ENCODE measurements at regions of chr13 and their contacts with region 1.

Region 1: DNA sequence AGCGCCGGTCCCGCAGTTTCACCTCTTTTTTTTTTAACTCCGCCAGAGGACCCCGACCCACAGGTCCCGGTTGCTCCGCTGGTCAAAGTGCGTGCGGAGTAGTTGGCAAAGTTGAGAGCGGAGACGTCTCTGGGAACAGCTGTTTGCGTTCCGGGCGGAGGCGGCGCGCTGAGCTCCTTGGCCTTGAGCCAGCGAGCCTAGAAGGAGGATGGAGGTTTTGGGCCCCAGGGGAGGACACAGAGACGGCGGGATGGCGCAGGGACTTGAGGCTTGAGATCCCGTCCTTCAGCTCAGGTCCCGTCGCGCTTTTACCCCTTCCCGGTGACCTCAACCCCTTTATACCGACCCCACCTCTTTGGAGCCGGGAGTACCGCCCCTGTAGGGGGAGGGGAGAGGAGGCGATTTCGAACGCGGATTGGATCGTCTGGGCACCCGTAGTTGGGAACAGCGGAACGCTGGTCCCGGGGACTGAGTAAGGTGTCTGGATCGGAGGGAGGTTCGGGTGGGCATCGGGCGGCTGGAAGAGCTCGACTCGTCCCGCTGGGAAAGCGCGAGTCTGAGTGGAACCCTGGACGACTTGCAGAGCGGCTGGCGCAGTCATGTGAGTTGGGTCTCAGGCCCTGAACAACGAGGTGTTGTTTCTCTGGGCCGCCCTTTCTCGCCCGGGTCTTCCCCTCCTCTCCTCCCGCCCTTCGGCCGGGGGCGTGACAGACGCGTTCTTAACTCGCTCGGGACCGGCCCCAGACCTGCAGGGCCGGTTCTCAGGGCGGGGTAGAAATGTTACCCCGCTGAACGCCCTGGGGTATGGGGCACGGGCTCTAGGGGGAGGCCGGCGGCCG is at the start of gene WBP4:
- DNase-seq: peak; percentile 81 to 94 (median 90)
- ATAC-seq: peak; percentile 78
- H3K4me3 ChIP-seq: peak within 1 kb of the TSS; percentile 74
- H3K4me3 Mint-ChIP-seq: peak within 1 kb of the TSS; percentile 97 to 100 (median 99)
- H3K27ac ChIP-seq: peak within 1 kb of the TSS; percentile 77
- H3K27ac Mint-ChIP-seq: peak within 1 kb of the TSS; percentile 95 to 100 (median 100)
- H3K4me1 ChIP-seq: peaks cover 0 to 5% of the 10 kb centered on the region in 2 donors
- H3K4me1 Mint-ChIP-seq: peaks cover 33 to 82% (median 59%) of the 10 kb centered on the region in 7 donors
- H3K27me3 ChIP-seq: no peaks in the 10 kb centered on the region
- H3K27me3 Mint-ChIP-seq: peaks cover 0 to 10% (median 0%) of the 10 kb centered on the region in 5 donors
- total RNA-seq, gene WBP4: 6.5 to 9.8 (median 8.6) TPM

Region 2: DNA sequence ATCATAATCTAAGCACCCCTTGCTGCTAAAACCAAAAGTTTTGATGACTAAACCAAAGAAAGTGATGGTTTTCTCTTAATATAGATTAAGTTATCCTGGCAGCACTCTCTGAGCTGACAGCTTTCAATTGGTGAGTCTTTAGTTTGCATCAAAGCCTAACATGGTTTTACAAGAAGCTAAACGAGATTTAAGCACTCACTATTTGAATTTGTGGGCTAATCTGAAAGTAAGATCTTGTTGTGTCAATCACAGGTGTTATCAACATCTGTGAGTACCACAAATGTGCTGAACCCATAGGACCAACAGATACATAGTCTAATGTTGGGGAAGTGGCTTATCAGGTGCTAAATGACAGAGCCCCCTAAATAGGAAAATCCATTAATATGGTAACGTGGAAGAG is 1682.2 kb before region 1 on chr13:
- CTCF ChIA-PET with region 1: no interaction called
- POLR2A ChIA-PET with region 1: no interaction called
- intact Hi-C with region 1: no loop called
- DNase-seq: no peak
- ATAC-seq: no peak
- H3K4me3 ChIP-seq: no peak overlapping the region
- H3K4me3 Mint-ChIP-seq: no peak overlapping the region
- H3K27ac ChIP-seq: no peak overlapping the region
- H3K27ac Mint-ChIP-seq: no peak overlapping the region
- H3K4me1 ChIP-seq: no peaks in the 10 kb centered on the region
- H3K4me1 Mint-ChIP-seq: no peaks in the 10 kb centered on the region
- H3K27me3 ChIP-seq: no peaks in the 10 kb centered on the region
- H3K27me3 Mint-ChIP-seq: peaks cover 0 to 4% (median 2%) of the 10 kb centered on the region in 5 donors

Region 3: GRCh38 chr13:40770934-40771618 is 290.2 kb before region 1 on chr13 and contains the start of gene MRPS31:
- CTCF ChIA-PET with region 1: no interaction called
- POLR2A ChIA-PET with region 1: interaction called, 3 read pairs
- intact Hi-C with region 1: loop called (anchors 1 kb)
- DNase-seq: peak; percentile 89 to 97 (median 93)
- ATAC-seq: peak; percentile 99
- H3K4me3 ChIP-seq: peak within 1 kb of the TSS; percentile 78
- H3K4me3 Mint-ChIP-seq: peak within 1 kb of the TSS; percentile 94 to 100 (median 99)
- H3K27ac ChIP-seq: peak within 1 kb of the TSS; percentile 89
- H3K27ac Mint-ChIP-seq: peak within 1 kb of the TSS; percentile 93 to 100 (median 98)
- H3K4me1 ChIP-seq: peaks cover 15 to 16% of the 10 kb centered on the region in 2 donors
- H3K4me1 Mint-ChIP-seq: peaks cover 16 to 41% (median 33%) of the 10 kb centered on the region in 7 donors
- H3K27me3 ChIP-seq: no peaks in the 10 kb centered on the region
- H3K27me3 Mint-ChIP-seq: no peaks in the 10 kb centered on the region
- total RNA-seq, gene MRPS31: 15.8 to 39.9 (median 34.7) TPM

Region 4: GRCh38 chr13:40974460-40975407 is 86.6 kb before region 1 on chr13:
- CTCF ChIA-PET with region 1: interaction called, 5 read pairs
- POLR2A ChIA-PET with region 1: interaction called, 27 read pairs
- intact Hi-C with region 1: loop called (anchors 1 kb)
- DNase-seq: peak in 7 of 9 donors; percentile 43 to 66 (median 52)
- ATAC-seq: peak; percentile 88
- H3K4me3 ChIP-seq: no peak overlapping the region
- H3K4me3 Mint-ChIP-seq: peak overlapping the region; percentile 68 to 94 (median 82)
- H3K27ac ChIP-seq: peak overlapping the region; percentile 86
- H3K27ac Mint-ChIP-seq: peak overlapping the region; percentile 64 to 97 (median 82)
- H3K4me1 ChIP-seq: peaks cover 75 to 80% of the 10 kb centered on the region in 2 donors
- H3K4me1 Mint-ChIP-seq: peaks cover 75 to 99% (median 95%) of the 10 kb centered on the region in 7 donors
- H3K27me3 ChIP-seq: no peaks in the 10 kb centered on the region
- H3K27me3 Mint-ChIP-seq: no peaks in the 10 kb centered on the region

Region 5: DNA sequence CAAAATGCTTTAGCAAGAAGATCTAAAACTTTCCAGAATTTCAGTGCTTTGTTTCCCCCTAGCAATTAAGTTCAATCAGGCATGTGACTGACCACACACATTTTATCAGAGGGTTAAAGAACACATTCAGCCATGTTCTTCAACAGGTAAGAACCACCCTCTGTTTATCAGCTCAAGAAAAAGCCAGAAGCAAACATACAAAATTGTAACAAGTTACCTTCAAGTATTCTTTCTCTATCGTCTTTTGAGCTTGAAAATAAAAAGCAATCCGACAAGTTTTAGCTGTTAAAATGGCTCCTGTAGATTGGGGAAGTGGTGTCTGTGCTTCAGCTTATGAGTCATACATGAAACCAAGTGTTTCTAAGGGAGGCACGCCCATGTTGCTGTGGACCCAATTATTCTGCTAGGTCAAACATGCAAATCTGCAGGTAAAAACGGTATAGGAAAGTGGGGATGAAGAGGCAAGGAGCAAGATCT is 42.2 kb before region 1 on chr13 and contains the start of gene ELF1:
- CTCF ChIA-PET with region 1: interaction called, 5 read pairs
- POLR2A ChIA-PET with region 1: interaction called, 71 read pairs
- intact Hi-C with region 1: loop called (anchors 1 kb)
- DNase-seq: peak in 8 of 9 donors; percentile 35 to 83 (median 75)
- ATAC-seq: peak; percentile 93
- H3K4me3 ChIP-seq: peak within 1 kb of the TSS; percentile 76
- H3K4me3 Mint-ChIP-seq: peak within 1 kb of the TSS; percentile 79 to 94 (median 90)
- H3K27ac ChIP-seq: peak within 1 kb of the TSS; percentile 93
- H3K27ac Mint-ChIP-seq: peak within 1 kb of the TSS; percentile 90 to 98 (median 96)
- H3K4me1 ChIP-seq: peaks cover 14 to 22% of the 10 kb centered on the region in 2 donors
- H3K4me1 Mint-ChIP-seq: peaks cover 29 to 61% (median 50%) of the 10 kb centered on the region in 7 donors
- H3K27me3 ChIP-seq: no peaks in the 10 kb centered on the region
- H3K27me3 Mint-ChIP-seq: no peaks in the 10 kb centered on the region
- total RNA-seq, gene ELF1: 117 to 193 (median 180) TPM

Region 6: GRCh38 chr13:41193919-41194824 is 132.9 kb after region 1 on chr13 and contains the start of gene KBTBD7:
- CTCF ChIA-PET with region 1: no interaction called
- POLR2A ChIA-PET with region 1: interaction called, 3 read pairs
- intact Hi-C with region 1: loop called (anchors 1 kb)
- DNase-seq: peak; percentile 78 to 94 (median 83)
- ATAC-seq: peak; percentile 98
- H3K4me3 ChIP-seq: peak within 1 kb of the TSS; percentile 85
- H3K4me3 Mint-ChIP-seq: peak within 1 kb of the TSS; percentile 87 to 98 (median 94)
- H3K27ac ChIP-seq: peak within 1 kb of the TSS; percentile 70
- H3K27ac Mint-ChIP-seq: peak within 1 kb of the TSS; percentile 79 to 94 (median 90)
- H3K4me1 ChIP-seq: peaks cover 0 to 13% of the 10 kb centered on the region in 2 donors
- H3K4me1 Mint-ChIP-seq: peaks cover 25 to 50% (median 41%) of the 10 kb centered on the region in 7 donors
- H3K27me3 ChIP-seq: no peaks in the 10 kb centered on the region
- H3K27me3 Mint-ChIP-seq: no peaks in the 10 kb centered on the region
- total RNA-seq, gene KBTBD7: 2.8 to 12.9 (median 11.5) TPM

Region 7: DNA sequence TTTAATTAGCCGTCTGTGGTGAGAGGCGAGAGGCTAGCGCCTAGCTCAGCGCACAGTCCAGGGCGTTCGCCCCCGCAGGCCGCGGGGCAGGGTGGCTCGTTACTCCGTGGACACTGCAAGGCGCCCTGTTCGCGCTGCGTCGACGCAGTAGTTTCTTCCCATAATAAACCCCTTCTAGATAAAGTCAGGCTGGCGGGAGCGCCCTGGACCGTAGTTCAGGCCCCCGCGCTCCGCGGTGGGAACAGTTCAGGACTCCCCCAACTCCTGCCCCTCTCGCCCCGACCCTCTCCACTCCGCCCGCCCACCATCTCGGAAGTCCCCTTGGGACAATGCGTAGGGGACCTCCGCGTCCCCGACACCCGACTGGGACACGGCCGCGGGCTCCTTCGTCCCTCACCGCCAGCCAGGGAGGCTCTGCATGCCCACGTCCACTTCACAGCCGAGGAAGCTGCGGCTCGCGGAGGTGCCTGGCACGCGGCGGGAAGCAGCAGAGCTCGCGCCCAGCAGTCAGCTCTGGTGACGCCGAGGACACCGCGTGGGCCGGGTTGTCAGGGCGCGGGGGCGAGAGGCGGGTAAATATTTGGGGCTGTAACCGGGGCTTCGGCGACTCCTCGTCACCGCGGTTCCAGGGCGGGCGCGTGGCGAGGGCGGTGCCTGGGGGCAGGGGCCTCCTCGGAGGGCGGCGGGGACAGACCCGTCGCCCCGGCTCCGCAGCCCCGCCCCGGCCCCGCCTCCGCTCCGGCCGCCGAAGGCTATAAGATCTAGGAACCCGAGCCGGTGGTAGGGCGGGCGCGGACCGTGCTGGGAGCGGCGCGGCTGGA is 395.7 kb after region 1 on chr13 and contains the start of gene RGCC:
- CTCF ChIA-PET with region 1: no interaction called
- POLR2A ChIA-PET with region 1: no interaction called
- intact Hi-C with region 1: loop called (anchors 2 kb)
- DNase-seq: peak; percentile 89 to 98 (median 94)
- ATAC-seq: peak; percentile 90
- H3K4me3 ChIP-seq: peak within 1 kb of the TSS; percentile 84
- H3K4me3 Mint-ChIP-seq: peak within 1 kb of the TSS; percentile 91 to 98 (median 96)
- H3K27ac ChIP-seq: peak within 1 kb of the TSS; percentile 97
- H3K27ac Mint-ChIP-seq: peak within 1 kb of the TSS; percentile 93 to 99 (median 98)
- H3K4me1 ChIP-seq: peaks cover 22 to 37% of the 10 kb centered on the region in 2 donors
- H3K4me1 Mint-ChIP-seq: peaks cover 28 to 47% (median 38%) of the 10 kb centered on the region in 7 donors
- H3K27me3 ChIP-seq: no peaks in the 10 kb centered on the region
- H3K27me3 Mint-ChIP-seq: peaks cover 0 to 26% (median 0%) of the 10 kb centered on the region in 5 donors
- total RNA-seq, gene RGCC: 45.9 to 402 (median 197) TPM

Region 8: GRCh38 chr13:41960639-41961465 is 899.6 kb after region 1 on chr13 and contains the start of gene VWA8:
- CTCF ChIA-PET with region 1: no interaction called
- POLR2A ChIA-PET with region 1: no interaction called
- intact Hi-C with region 1: loop called in 1 of 2 experiments (anchors 2 kb)
- DNase-seq: peak; percentile 75 to 86 (median 84)
- ATAC-seq: peak; percentile 97
- H3K4me3 ChIP-seq: peak within 1 kb of the TSS; percentile 86
- H3K4me3 Mint-ChIP-seq: peak within 1 kb of the TSS; percentile 92 to 97 (median 94)
- H3K27ac ChIP-seq: peak within 1 kb of the TSS; percentile 84
- H3K27ac Mint-ChIP-seq: peak within 1 kb of the TSS; percentile 88 to 99 (median 95)
- H3K4me1 ChIP-seq: peaks cover 14 to 16% of the 10 kb centered on the region in 2 donors
- H3K4me1 Mint-ChIP-seq: peaks cover 19 to 63% (median 43%) of the 10 kb centered on the region in 7 donors
- H3K27me3 ChIP-seq: no peaks in the 10 kb centered on the region
- H3K27me3 Mint-ChIP-seq: peaks cover 0 to 2% (median 0%) of the 10 kb centered on the region in 5 donors
- total RNA-seq, gene VWA8: 16.8 to 26.3 (median 21.8) TPM

Region 9: GRCh38 chr13:42028113-42028799 is 967.0 kb after region 1 on chr13:
- CTCF ChIA-PET with region 1: no interaction called
- POLR2A ChIA-PET with region 1: no interaction called
- intact Hi-C with region 1: no loop called
- DNase-seq: no peak
- ATAC-seq: no peak
- H3K4me3 ChIP-seq: no peak overlapping the region
- H3K4me3 Mint-ChIP-seq: no peak overlapping the region
- H3K27ac ChIP-seq: no peak overlapping the region
- H3K27ac Mint-ChIP-seq: no peak overlapping the region
- H3K4me1 ChIP-seq: no peaks in the 10 kb centered on the region
- H3K4me1 Mint-ChIP-seq: no peaks in the 10 kb centered on the region
- H3K27me3 ChIP-seq: no peaks in the 10 kb centered on the region
- H3K27me3 Mint-ChIP-seq: peaks cover 0 to 15% (median 8%) of the 10 kb centered on the region in 5 donors